Endothelial cell of umbilical vein (primary cell): ENCODE measurements at regions of chr17 and their contacts with region 1.

Region 1: DNA sequence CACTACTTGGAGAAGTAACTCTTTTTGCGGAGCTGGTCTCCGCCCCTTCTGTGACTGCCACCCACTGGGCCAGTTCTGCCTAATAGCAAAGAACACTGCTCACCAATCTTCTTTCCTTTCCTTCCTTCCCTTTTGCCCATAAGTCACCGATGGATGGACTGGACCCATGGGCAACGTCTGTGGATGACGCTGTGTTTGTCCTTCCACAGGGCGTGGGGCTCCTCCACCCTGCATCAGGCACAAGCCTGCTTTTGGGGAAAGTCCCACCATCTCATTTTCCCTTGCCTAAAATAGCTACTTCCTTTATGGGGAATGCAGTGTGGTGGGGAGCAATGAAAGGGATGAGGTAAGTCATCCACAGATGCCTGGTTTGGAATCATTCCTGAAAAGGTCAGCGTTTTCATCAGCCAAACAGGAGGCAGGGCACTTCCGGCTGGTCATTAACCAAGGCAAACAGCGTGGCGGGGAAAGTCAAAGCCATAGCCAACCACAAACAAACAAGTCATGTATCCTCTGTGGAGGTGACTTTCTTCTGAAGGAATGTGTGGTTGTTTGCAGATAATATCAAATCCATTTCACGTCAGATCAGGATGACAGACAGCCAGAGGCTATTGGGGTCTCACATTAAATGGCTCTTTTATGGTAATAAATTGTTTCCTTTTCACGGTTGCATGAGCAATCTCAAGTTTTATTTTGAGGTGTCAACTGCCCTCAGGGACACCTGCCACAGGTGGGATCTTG is 30.7 kb upstream of the MED9 start:
- DNase-seq: peak; percentile 96
- H3K4me3 ChIP-seq: no peak overlapping the region
- H3K27ac ChIP-seq: peak overlapping the region; percentile 90
- H3K4me1 ChIP-seq: peaks cover 26% of the 10 kb centered on the region
- H3K27me3 ChIP-seq: peaks cover 0 to 2% of the 10 kb centered on the region in 2 experiments
- CTCF ChIP-seq: peak in 1 of 2 donors; percentile 5
- POLR2A ChIP-seq: peak; percentile 42

Region 2: DNA sequence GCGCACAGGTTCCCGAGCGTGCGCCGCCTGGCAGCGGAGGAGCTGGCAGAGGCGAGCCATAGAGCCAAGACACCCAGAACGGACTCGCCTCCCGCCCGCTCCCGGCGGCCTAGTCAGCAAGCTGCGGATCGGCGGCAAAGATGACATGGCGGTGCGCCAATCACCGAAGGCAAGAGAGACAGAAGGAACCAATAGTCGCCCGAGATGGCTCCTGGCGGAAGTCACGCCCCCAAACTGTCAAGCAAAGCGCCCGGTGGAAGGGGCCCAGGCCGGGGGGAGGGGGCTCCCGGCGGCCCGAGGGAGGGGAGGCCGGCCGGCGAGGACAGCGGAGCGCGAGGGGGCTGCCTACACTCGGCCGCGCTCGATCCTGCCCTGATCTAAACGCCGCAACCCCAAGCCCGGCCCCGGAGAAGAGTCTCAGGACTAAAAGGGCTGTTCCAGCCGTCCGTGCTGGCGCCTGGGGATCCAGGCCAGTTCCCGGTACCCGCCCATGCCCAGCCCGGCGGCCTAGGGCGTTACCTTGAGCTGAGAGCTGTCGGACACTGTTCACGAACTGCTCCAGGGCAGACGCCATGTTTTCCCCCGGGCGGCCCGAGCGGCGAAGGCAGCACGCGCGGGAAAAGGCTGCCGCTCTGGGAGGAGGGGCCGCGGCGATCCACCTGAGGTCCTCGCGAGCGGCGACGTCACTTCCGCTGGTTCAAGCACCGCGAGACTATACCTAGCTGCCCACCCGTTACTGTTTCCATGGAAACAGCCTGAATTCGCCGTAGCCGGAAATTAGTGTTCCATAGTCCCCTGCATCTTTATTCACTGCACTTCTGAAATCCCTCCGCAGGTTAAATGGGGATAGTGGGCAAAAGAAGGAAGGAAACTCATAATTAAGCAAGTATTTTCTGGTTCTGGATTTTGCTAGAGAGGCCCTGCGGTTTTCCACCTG is 165.2 kb before region 1 on chr17 and contains the start of gene COPS3:
- CTCF ChIA-PET with region 1: no interaction called
- POLR2A ChIA-PET with region 1: no interaction called
- dilution Hi-C with region 1: no loop called
- intact Hi-C with region 1: no loop called
- DNase-seq: peak; percentile 98
- H3K4me3 ChIP-seq: peak within 1 kb of the TSS; percentile 70 to 98 (median 79)
- H3K27ac ChIP-seq: peak within 1 kb of the TSS; percentile 86
- H3K4me1 ChIP-seq: peaks cover 13% of the 10 kb centered on the region
- H3K27me3 ChIP-seq: no peaks in the 10 kb centered on the region
- CTCF ChIP-seq: no peak
- POLR2A ChIP-seq: peak; percentile 76
- total RNA-seq, gene COPS3: 68.4 and 80.9 TPM in 2 replicates

Region 3: GRCh38 chr17:17401271-17401781 is 44.8 kb before region 1 on chr17:
- CTCF ChIA-PET with region 1: no interaction called
- POLR2A ChIA-PET with region 1: no interaction called
- dilution Hi-C with region 1: no loop called
- intact Hi-C with region 1: loop called (anchors 2 kb)
- DNase-seq: no peak
- H3K4me3 ChIP-seq: no peak overlapping the region
- H3K27ac ChIP-seq: no peak overlapping the region
- H3K4me1 ChIP-seq: peaks cover 24% of the 10 kb centered on the region
- H3K27me3 ChIP-seq: no peaks in the 10 kb centered on the region
- CTCF ChIP-seq: peak in 1 of 2 donors; percentile 3
- POLR2A ChIP-seq: no peak

Region 4: GRCh38 chr17:17416007-17416399 is 30.1 kb before region 1 on chr17:
- CTCF ChIA-PET with region 1: interaction called, 8 read pairs
- POLR2A ChIA-PET with region 1: interaction called, 3 read pairs
- dilution Hi-C with region 1: no loop called
- intact Hi-C with region 1: loop called (anchors 1 kb)
- DNase-seq: peak; percentile 91
- H3K4me3 ChIP-seq: no peak overlapping the region
- H3K27ac ChIP-seq: peak overlapping the region; percentile 94
- H3K4me1 ChIP-seq: peaks cover 48% of the 10 kb centered on the region
- H3K27me3 ChIP-seq: no peaks in the 10 kb centered on the region
- CTCF ChIP-seq: no peak
- POLR2A ChIP-seq: no peak

Region 5: GRCh38 chr17:17476865-17477467 is 30.9 kb after region 1 on chr17 and contains the start of gene MED9:
- CTCF ChIA-PET with region 1: no interaction called
- POLR2A ChIA-PET with region 1: no interaction called
- dilution Hi-C with region 1: no loop called
- intact Hi-C with region 1: loop called (anchors 1 kb)
- DNase-seq: peak; percentile 85
- H3K4me3 ChIP-seq: peak within 1 kb of the TSS; percentile 66 to 97 (median 78)
- H3K27ac ChIP-seq: peak within 1 kb of the TSS; percentile 69
- H3K4me1 ChIP-seq: peaks cover 10% of the 10 kb centered on the region
- H3K27me3 ChIP-seq: peaks cover 11 to 20% of the 10 kb centered on the region in 2 experiments
- CTCF ChIP-seq: no peak
- POLR2A ChIP-seq: peak; percentile 71
- total RNA-seq, gene MED9: 13.6 and 15.1 TPM in 2 replicates

Region 6: DNA sequence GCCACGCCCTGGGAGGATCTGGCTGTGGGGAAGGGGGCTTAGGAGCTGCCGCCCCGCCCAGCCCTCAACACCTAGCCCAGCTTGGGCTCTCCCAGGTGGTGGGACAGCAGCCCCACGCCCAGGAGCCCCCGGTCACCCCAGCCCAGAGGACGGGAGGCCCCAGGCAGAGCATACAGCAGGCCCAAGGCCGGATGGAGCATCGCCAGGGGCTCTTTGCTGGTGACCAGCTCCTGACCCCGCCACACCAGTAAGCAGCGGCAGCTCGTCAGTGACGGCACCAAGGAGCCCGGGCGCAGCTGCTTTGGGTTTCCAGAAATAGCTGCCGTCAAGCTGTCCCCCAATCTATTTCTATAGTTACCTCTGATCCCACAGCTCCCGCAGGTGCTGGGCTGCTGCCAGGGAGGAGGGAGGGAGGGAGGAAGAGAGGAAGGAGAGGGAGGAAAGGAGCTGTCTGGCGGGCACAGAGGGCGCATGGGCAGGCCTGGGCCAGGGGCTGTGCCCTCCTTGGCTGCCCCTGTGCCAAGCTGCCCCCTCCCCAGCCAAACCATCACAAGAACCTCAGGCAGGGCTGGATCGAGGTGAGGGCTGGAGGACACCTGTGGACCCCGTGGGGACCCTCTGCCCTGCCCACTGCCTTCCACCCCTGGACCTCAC is 60.8 kb after region 1 on chr17:
- CTCF ChIA-PET with region 1: no interaction called
- POLR2A ChIA-PET with region 1: no interaction called
- dilution Hi-C with region 1: no loop called
- intact Hi-C with region 1: no loop called
- DNase-seq: no peak
- H3K4me3 ChIP-seq: no peak overlapping the region
- H3K27ac ChIP-seq: no peak overlapping the region
- H3K4me1 ChIP-seq: no peaks in the 10 kb centered on the region
- H3K27me3 ChIP-seq: no peaks in the 10 kb centered on the region
- CTCF ChIP-seq: no peak
- POLR2A ChIP-seq: no peak

Region 7: DNA sequence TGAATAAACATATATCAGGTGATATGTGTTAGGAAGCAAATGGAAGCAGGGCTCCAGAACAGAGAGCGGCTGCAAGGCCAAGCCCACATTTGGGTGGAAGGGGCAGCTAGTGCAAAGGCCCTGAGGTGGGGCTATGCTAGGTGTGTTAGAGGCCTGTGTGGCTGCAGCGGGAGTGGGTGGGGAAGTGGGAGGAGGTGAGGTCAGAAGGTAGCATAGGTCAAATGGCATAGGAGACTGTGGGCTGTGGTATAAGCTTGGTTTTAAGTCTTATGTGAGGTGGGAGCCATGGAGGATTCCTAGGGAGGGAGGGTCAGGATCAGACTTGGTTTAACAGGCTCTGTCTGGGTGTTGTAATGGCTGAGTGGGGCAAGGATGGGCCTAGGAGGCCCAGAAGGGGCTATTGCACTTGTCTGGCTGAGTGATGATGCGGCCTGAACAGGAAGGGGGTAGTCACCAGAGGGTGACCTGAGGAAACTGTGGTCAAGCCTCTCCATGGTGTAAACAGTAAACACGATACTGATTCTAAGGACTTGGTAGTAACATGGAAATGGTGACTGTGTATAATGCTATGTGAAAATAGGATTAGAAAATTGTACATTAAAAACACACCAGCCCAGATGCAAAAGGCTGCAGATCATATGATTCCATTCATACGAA is 266.3 kb after region 1 on chr17:
- CTCF ChIA-PET with region 1: no interaction called
- POLR2A ChIA-PET with region 1: no interaction called
- dilution Hi-C with region 1: no loop called
- intact Hi-C with region 1: loop called (anchors 1 kb)
- DNase-seq: peak; percentile 94
- H3K4me3 ChIP-seq: no peak overlapping the region
- H3K27ac ChIP-seq: peak overlapping the region; percentile 98
- H3K4me1 ChIP-seq: peaks cover 33% of the 10 kb centered on the region
- H3K27me3 ChIP-seq: no peaks in the 10 kb centered on the region
- CTCF ChIP-seq: no peak
- POLR2A ChIP-seq: no peak